ENCODE measurements at regions of chr1 and their contacts with region 1.

Region 1: GRCh38 chr1:181142096-181142958 is 53.8 kb downstream of the IER5 start:
- DNase-seq: peak; percentile 78 to 84 (median 81)
- H3K4me3 ChIP-seq: no peak overlapping the region
- H3K4me3 Mint-ChIP-seq: peak overlapping the region in 4 of 8 donors; percentile 4 to 26 (median 14)
- H3K27ac ChIP-seq: no peak overlapping the region
- H3K27ac Mint-ChIP-seq: peak overlapping the region in 4 of 7 donors; percentile 1 to 61 (median 33)
- H3K4me1 ChIP-seq: peaks cover 42% of the 10 kb centered on the region
- H3K4me1 Mint-ChIP-seq: peaks cover 19 to 51% (median 34%) of the 10 kb centered on the region in 4 donors
- H3K27me3 ChIP-seq: no peaks in the 10 kb centered on the region
- H3K27me3 Mint-ChIP-seq: peaks cover 0 to 2% of the 10 kb centered on the region in 2 donors

Region 2: GRCh38 chr1:180594723-180595122 is 547.6 kb before region 1 on chr1:
- CTCF ChIA-PET with region 1: no interaction called
- POLR2A ChIA-PET with region 1: no interaction called
- intact Hi-C with region 1: no loop called
- DNase-seq: no peak
- H3K4me3 ChIP-seq: no peak overlapping the region
- H3K4me3 Mint-ChIP-seq: no peak overlapping the region
- H3K27ac ChIP-seq: no peak overlapping the region
- H3K27ac Mint-ChIP-seq: no peak overlapping the region
- H3K4me1 ChIP-seq: no peaks in the 10 kb centered on the region
- H3K4me1 Mint-ChIP-seq: no peaks in the 10 kb centered on the region
- H3K27me3 ChIP-seq: no peaks in the 10 kb centered on the region
- H3K27me3 Mint-ChIP-seq: peaks cover 5 to 9% of the 10 kb centered on the region in 2 donors

Region 3: GRCh38 chr1:181021811-181022434 is 120.4 kb before region 1 on chr1:
- CTCF ChIA-PET with region 1: interaction called, 10 read pairs
- POLR2A ChIA-PET with region 1: no interaction called
- intact Hi-C with region 1: no loop called
- DNase-seq: peak; percentile 26 to 79 (median 43)
- H3K4me3 ChIP-seq: peak overlapping the region; percentile 73 to 90
- H3K4me3 Mint-ChIP-seq: peak overlapping the region; percentile 95 to 98 (median 96)
- H3K27ac ChIP-seq: peak overlapping the region; percentile 75
- H3K27ac Mint-ChIP-seq: peak overlapping the region; percentile 93 to 100 (median 99)
- H3K4me1 ChIP-seq: peaks cover 51% of the 10 kb centered on the region
- H3K4me1 Mint-ChIP-seq: peaks cover 32 to 66% (median 41%) of the 10 kb centered on the region in 4 donors
- H3K27me3 ChIP-seq: no peaks in the 10 kb centered on the region
- H3K27me3 Mint-ChIP-seq: peaks cover 0 to 8% of the 10 kb centered on the region in 2 donors

Region 4: GRCh38 chr1:181062836-181063428 is 79.4 kb before region 1 on chr1:
- CTCF ChIA-PET with region 1: interaction called, 10 read pairs
- POLR2A ChIA-PET with region 1: interaction called, 3 read pairs
- intact Hi-C with region 1: no loop called
- DNase-seq: peak in 4 of 5 donors; percentile 13 to 27 (median 19)
- H3K4me3 ChIP-seq: peak overlapping the region in 1 of 2 donors; percentile 33
- H3K4me3 Mint-ChIP-seq: peak overlapping the region; percentile 70 to 91 (median 76)
- H3K27ac ChIP-seq: peak overlapping the region; percentile 39
- H3K27ac Mint-ChIP-seq: peak overlapping the region; percentile 27 to 95 (median 87)
- H3K4me1 ChIP-seq: peaks cover 19% of the 10 kb centered on the region
- H3K4me1 Mint-ChIP-seq: peaks cover 18 to 24% (median 21%) of the 10 kb centered on the region in 4 donors
- H3K27me3 ChIP-seq: no peaks in the 10 kb centered on the region
- H3K27me3 Mint-ChIP-seq: no peaks in the 10 kb centered on the region

Region 5: DNA sequence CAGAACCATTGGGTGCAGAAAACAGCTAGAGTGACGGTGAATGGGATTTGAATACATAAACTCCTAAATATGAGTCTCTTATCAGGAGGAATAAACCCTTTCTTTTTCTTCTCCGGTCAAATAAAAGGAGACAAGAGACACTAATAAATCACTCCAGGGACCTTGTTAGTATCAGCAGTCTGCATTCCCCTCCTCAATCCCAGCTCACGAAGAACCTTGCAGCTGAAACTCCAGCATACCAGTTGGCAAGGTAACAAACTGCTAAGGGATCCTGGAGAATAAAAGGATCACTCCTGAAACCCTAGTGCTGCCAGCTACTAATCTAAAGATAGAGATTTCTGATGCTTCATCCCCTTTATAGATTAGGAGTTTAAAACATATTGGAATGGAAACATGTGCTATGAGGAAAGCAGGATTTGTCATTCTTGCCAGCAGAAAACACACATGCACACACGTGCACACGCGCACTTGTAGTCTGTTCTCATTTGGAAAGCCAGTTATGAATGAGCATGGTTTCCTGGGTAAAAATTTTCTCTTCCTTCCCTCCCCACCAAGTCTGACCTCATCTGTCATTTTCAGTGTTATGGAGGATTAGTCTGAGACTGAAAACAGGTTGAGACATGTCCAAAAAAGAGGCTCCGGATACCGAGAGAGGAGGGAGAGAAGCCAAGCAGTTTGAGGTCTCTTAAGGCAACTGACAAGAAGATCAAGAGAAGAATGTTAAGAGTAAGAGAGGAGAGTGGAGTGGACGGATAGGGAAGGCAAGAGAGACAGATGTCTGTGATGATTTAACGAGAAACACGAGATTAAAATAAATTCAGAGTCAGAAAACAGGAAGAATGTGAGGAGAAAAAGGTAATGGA is 42.9 kb before region 1 on chr1:
- CTCF ChIA-PET with region 1: interaction called, 38 read pairs
- POLR2A ChIA-PET with region 1: interaction called, 31 read pairs
- intact Hi-C with region 1: loop called (anchors 2 kb)
- DNase-seq: no peak
- H3K4me3 ChIP-seq: no peak overlapping the region
- H3K4me3 Mint-ChIP-seq: peak overlapping the region in 7 of 8 donors; percentile 29 to 75 (median 62)
- H3K27ac ChIP-seq: no peak overlapping the region
- H3K27ac Mint-ChIP-seq: peak overlapping the region; percentile 47 to 91 (median 79)
- H3K4me1 ChIP-seq: peaks cover 59% of the 10 kb centered on the region
- H3K4me1 Mint-ChIP-seq: peaks cover 40 to 68% (median 56%) of the 10 kb centered on the region in 4 donors
- H3K27me3 ChIP-seq: no peaks in the 10 kb centered on the region
- H3K27me3 Mint-ChIP-seq: no peaks in the 10 kb centered on the region

Region 6: DNA sequence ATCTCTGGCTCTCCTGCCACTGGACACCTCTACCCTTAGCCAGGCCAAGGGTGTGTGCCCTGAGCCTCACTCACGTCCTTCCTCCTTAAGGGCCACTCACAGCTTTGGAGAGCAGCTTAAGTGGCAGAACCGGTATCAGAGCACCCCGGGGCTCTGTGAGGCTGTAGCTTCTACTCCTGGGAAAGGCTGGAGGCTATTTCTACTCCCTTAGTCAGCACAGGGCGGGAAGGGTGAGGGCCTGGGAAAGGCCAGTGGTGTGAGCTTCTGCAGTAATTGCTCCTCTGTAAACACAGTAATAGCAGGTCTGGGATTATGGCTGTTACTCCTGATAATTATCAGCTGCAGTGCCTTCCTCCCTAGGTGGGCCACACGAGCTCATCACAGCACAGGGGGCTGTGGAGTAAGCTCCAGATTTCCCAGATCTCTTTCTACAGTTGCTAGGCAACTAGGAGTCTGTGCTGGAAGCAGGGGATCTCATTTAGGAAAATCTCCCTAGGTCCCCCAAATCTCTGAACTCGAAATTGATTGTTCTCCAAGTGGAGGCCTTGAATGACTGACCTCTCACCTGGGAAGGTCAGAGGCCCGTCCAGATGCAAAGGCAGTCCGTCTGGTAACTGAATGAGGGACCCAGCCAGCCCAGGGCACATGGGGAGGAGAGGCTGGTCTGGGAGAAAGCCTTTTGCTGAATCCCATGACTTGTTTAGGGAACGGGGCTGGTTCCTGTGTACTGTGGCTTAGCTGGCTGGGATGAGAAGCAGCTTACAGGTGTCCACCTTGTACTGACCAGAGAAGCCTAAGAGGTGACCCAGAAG is 24.5 kb before region 1 on chr1:
- CTCF ChIA-PET with region 1: interaction called, 31 read pairs
- POLR2A ChIA-PET with region 1: no interaction called
- intact Hi-C with region 1: no loop called
- DNase-seq: no peak
- H3K4me3 ChIP-seq: no peak overlapping the region
- H3K4me3 Mint-ChIP-seq: no peak overlapping the region
- H3K27ac ChIP-seq: no peak overlapping the region
- H3K27ac Mint-ChIP-seq: no peak overlapping the region
- H3K4me1 ChIP-seq: no peaks in the 10 kb centered on the region
- H3K4me1 Mint-ChIP-seq: peaks cover 0 to 2% (median 0%) of the 10 kb centered on the region in 4 donors
- H3K27me3 ChIP-seq: no peaks in the 10 kb centered on the region
- H3K27me3 Mint-ChIP-seq: no peaks in the 10 kb centered on the region

Region 7: DNA sequence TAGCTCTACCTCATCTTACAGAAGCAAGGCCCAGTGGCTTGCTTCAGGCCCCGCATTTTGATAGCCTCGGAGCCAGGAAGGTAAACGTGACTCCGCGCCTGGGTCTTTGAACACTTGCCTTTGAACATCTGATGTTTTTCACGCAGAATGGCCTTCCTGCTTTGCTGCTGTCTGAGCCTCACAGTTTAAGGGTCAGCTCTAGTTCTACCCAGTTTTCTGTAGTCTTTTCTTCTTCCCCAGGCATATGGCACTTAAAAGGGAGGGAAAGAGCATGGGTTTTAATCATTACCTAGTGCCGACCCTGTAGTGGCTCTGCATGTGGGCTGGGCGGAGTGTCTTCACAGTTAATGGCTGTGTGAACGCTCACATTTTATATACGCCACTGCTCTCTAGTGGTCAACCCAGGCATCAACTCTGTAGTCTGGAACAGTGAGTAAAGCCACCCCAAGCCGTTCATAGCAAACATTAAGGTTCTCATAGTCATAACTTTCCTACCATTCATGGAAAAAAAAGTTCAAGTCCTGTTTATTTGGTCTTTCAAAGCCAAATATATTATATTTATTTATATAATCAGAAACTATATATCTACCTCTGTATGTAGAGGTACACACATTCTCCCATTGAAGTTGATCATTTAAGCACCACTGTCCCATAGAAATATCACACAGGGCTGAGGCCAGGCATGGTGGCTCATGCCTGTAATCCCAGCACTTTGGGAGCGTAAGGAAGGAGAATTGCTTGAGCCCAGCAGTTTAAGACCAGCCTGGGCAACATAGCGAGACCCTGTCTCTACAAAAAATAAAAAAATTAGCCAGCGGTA is 24.3 kb after region 1 on chr1:
- CTCF ChIA-PET with region 1: interaction called, 262 read pairs
- POLR2A ChIA-PET with region 1: interaction called, 71 read pairs
- intact Hi-C with region 1: loop called (anchors 1 kb)
- DNase-seq: peak; percentile 72 to 78 (median 76)
- H3K4me3 ChIP-seq: no peak overlapping the region
- H3K4me3 Mint-ChIP-seq: peak overlapping the region in 7 of 8 donors; percentile 41 to 84 (median 72)
- H3K27ac ChIP-seq: no peak overlapping the region
- H3K27ac Mint-ChIP-seq: peak overlapping the region; percentile 57 to 88 (median 76)
- H3K4me1 ChIP-seq: peaks cover 6% of the 10 kb centered on the region
- H3K4me1 Mint-ChIP-seq: peaks cover 5 to 8% (median 6%) of the 10 kb centered on the region in 4 donors
- H3K27me3 ChIP-seq: no peaks in the 10 kb centered on the region
- H3K27me3 Mint-ChIP-seq: no peaks in the 10 kb centered on the region